Activated B cell treated with CpG ODN at 0.5 μM for 24 hours (primary cell): ENCODE measurements at regions of chr12 and their contacts with region 1.

Region 1: GRCh38 chr12:31297572-31298512 is 28.1 kb downstream of the SINHCAF start:
- DNase-seq: no peak
- ATAC-seq: peak; percentile 22
- H3K4me3 Mint-ChIP-seq: peak overlapping the region; percentile 78
- H3K27ac Mint-ChIP-seq: peak overlapping the region; percentile 95
- H3K4me1 Mint-ChIP-seq: peaks cover 64% of the 10 kb centered on the region
- H3K27me3 Mint-ChIP-seq: no peaks in the 10 kb centered on the region
- CTCF ChIP-seq: no peak

Region 2: DNA sequence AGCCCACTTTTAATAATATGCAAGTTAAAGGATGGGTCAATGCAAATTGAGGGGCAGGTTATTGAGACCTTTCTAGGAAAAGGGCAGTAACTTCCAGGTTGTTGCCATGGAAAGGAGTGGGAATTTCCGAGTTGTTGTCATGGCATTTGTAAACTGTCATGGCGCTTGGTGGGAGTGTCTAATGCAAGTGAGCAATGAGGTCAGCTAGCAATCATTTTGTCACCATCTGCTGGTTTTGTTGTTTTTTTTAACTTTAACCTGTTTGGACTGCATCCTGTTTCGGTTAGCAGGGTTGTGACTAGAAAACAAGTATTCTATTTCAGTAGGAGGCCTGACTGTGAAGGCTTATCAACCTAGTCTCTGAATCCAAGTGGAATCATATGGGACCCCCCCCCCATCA is 457.1 kb before region 1 on chr12:
- CTCF ChIA-PET with region 1: no interaction called
- POLR2A ChIA-PET with region 1: no interaction called
- intact Hi-C with region 1: no loop called
- DNase-seq: no peak
- ATAC-seq: no peak
- H3K4me3 Mint-ChIP-seq: no peak overlapping the region
- H3K27ac Mint-ChIP-seq: no peak overlapping the region
- H3K4me1 Mint-ChIP-seq: no peaks in the 10 kb centered on the region
- H3K27me3 Mint-ChIP-seq: peaks cover 19% of the 10 kb centered on the region
- CTCF ChIP-seq: no peak

Region 3: GRCh38 chr12:31317471-31318395 is 19.9 kb after region 1 on chr12:
- CTCF ChIA-PET with region 1: interaction called, 3 read pairs
- POLR2A ChIA-PET with region 1: interaction called, 116 read pairs
- intact Hi-C with region 1: loop called (anchors 1 kb)
- DNase-seq: no peak
- ATAC-seq: peak; percentile 46
- H3K4me3 Mint-ChIP-seq: peak overlapping the region; percentile 79
- H3K27ac Mint-ChIP-seq: peak overlapping the region; percentile 82
- H3K4me1 Mint-ChIP-seq: peaks cover 83% of the 10 kb centered on the region
- H3K27me3 Mint-ChIP-seq: no peaks in the 10 kb centered on the region
- CTCF ChIP-seq: no peak